HepG2 (cell line): ENCODE measurements at regions of chr3 and their contacts with region 1.

Region 1: DNA sequence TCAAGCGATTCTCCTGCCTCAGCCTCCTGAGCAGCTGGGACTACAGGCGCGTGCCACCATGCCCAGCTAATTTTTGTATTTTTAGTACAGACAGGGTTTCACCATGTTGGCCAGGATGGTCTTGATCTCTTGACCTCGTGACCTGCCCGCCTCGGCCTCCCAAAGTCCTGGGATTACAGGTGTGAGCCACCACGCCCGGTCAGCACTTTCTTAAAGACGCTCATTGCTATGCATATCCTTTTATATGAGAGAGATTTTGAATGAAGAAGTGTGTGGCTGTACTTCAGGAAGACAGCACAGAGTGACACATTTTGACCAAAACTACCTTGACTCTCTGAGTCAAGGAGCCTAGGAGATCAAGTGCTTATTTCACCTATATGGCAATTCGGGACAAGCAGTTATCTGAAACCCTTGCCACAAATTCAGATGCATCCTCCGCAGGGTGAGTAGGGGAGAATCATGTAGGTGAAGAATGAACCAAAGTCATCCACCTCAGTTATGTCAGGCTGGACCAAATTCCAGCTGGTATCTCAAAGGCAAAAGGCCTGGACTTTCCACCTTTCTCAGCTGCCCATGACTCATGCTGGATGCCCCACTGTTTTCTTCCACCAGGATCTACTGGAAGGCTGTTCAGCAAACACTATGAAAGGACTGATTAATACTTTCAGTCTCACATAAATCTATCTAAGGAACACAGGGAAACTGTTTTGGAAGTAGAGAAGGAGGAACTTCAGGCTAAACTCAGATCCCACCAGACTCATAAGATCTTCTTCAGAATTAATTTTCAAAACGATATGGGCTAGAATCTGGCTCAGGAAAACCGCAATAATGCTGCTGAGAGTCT is 31.9 kb downstream of the SUSD5 start:
- DNase-seq: peak; percentile 86
- ATAC-seq: peak; percentile 99
- H3K4me3 ChIP-seq: peak overlapping the region in 1 of 3 experiments; percentile 1; a peak in 1 of 6 replicates
- H3K27ac ChIP-seq: peak overlapping the region; percentile 38
- H3K4me1 ChIP-seq: peaks cover 46% of the 10 kb centered on the region
- H3K27me3 ChIP-seq: no peaks in the 10 kb centered on the region
- CTCF ChIP-seq: no peak
- EP300 ChIP-seq: peak; percentile 27 to 57; a peak in 2 of 4 replicates
- POLR2A ChIP-seq: no peak
- RAD21 ChIP-seq: no peak

Region 2: DNA sequence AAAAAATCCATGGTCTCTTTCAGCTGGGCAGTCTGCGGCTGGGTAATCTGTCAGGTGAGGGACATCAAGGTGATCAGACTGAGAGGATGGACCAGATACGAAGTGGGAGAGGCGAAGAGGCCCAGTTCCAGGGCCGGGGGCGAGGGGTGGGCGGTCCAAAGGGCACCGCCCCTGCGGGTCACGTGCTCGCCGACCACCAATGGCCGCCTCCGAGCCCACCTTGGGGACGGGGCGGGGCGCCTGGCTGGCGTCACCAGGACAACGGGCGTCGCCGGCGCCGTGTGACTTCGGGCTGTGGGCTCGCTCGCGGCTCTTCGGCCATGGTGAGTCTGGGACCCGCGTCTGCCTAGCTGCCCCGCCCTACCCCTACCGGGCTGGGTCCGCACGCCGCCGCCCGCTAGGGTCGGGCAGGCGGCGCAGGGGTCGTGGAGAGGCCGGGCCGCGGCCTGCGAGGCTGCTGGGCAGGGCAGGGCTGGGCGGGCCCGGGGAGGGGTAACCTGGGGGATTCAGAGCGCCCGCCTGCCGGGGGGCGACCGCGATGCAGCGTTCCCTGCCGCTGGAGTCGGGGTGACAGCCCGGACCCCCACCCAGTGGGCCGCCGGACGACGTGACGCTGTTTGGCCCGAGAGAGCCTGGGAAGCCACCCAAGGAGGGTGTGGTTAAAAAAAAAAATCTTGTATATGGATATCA is 90.6 kb after region 1 on chr3 and contains the start of gene FBXL2:
- CTCF ChIA-PET with region 1: no interaction called
- POLR2A ChIA-PET with region 1: no interaction called
- in situ Hi-C with region 1: no loop called
- intact Hi-C with region 1: loop called (anchors 10 kb)
- DNase-seq: peak; percentile 75
- ATAC-seq: peak; percentile 99
- H3K4me3 ChIP-seq: peak within 1 kb of the TSS; percentile 80 to 84 (median 80)
- H3K27ac ChIP-seq: no peak within 1 kb of the TSS
- H3K4me1 ChIP-seq: peaks cover 23% of the 10 kb centered on the region
- H3K27me3 ChIP-seq: no peaks in the 10 kb centered on the region; a peak in 1 of 5 replicates
- CTCF ChIP-seq: no peak
- EP300 ChIP-seq: no peak
- POLR2A ChIP-seq: peak in 1 of 2 experiments; percentile 53; a peak in 1 of 4 replicates
- RAD21 ChIP-seq: no peak
- total RNA-seq, gene FBXL2: 1.2 and 1.8 TPM in 2 replicates